Activated CD4-positive, alpha-beta memory T cell treated with anti-CD3 and anti-CD28 coated beads for 36 hours (primary cell): ENCODE measurements at regions of chr12 and their contacts with region 1.

Region 1: GRCh38 chr12:96194971-96195844 is 1.0 kb downstream of the ELK3 start:
- DNase-seq: peak; percentile 87
- H3K4me3 Mint-ChIP-seq: peak overlapping the region; percentile 93
- H3K27ac Mint-ChIP-seq: peak overlapping the region; percentile 99
- H3K4me1 Mint-ChIP-seq: peaks cover 45% of the 10 kb centered on the region
- H3K27me3 Mint-ChIP-seq: no peaks in the 10 kb centered on the region

Region 2: DNA sequence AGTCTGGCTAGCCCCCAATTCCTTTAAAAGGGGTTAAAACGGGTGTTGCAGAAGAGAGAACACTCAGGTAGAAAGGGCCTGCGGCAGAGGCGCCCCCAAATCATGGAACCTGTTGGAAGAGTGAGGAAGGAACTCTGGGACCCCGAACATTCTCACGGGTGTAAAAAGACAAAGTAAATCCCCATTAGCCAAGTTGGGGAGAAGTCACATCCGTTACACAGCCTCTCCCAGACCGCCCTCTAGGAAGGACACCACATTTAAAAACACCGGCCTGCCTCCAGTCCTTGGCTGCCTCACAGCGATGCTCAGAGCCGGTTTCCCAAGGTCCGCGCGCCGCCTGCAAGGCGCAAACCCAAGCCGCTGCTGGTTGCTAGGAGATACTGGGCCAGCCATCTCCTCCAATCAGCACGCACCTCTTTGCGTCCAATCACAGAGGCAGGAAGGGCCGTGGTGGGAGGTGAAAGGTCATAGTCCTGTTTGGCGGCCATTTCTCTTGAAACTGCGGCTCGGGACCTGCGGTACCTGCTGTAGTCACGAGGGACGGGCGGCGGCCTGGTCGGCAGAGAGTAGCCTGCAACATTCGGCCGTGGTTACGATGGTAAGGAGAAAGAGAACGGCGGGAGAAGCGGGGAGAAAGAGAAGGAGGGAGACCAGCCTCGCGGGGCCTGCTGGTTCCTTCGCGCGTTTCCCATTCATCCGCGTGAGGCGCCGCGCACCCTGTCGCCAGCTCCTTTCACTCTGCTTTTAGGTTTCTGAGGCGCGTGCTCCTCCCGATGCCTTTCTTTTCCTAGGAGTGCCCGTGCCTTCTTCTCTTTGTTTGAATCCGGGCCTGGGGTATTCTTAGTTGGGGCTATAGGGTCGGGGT is 336.5 kb before region 1 on chr12 and contains the start of gene SNRPF:
- CTCF ChIA-PET with region 1: no interaction called
- POLR2A ChIA-PET with region 1: no interaction called
- intact Hi-C with region 1: loop called (anchors 10 kb)
- DNase-seq: peak; percentile 97
- H3K4me3 Mint-ChIP-seq: no peak within 1 kb of the TSS
- H3K27ac Mint-ChIP-seq: no peak within 1 kb of the TSS
- H3K4me1 Mint-ChIP-seq: peaks cover 38% of the 10 kb centered on the region
- H3K27me3 Mint-ChIP-seq: peaks cover 5% of the 10 kb centered on the region
- total RNA-seq, gene SNRPF: 45.4 to 46.0 TPM

Region 3: GRCh38 chr12:96132819-96133218 is 62.4 kb before region 1 on chr12:
- CTCF ChIA-PET with region 1: interaction called, 4 read pairs
- POLR2A ChIA-PET with region 1: no interaction called
- intact Hi-C with region 1: loop called (anchors 1 kb)
- DNase-seq: peak; percentile 31
- H3K4me3 Mint-ChIP-seq: no peak overlapping the region
- H3K27ac Mint-ChIP-seq: no peak overlapping the region
- H3K4me1 Mint-ChIP-seq: peaks cover 22% of the 10 kb centered on the region
- H3K27me3 Mint-ChIP-seq: peaks cover 6% of the 10 kb centered on the region

Region 4: GRCh38 chr12:96208801-96209549 is 13.8 kb after region 1 on chr12:
- CTCF ChIA-PET with region 1: interaction called, 13 read pairs
- POLR2A ChIA-PET with region 1: interaction called, 31 read pairs
- intact Hi-C with region 1: loop called (anchors 1 kb)
- DNase-seq: peak; percentile 15
- H3K4me3 Mint-ChIP-seq: peak overlapping the region; percentile 30
- H3K27ac Mint-ChIP-seq: peak overlapping the region; percentile 93
- H3K4me1 Mint-ChIP-seq: peaks cover 95% of the 10 kb centered on the region
- H3K27me3 Mint-ChIP-seq: no peaks in the 10 kb centered on the region

Region 5: DNA sequence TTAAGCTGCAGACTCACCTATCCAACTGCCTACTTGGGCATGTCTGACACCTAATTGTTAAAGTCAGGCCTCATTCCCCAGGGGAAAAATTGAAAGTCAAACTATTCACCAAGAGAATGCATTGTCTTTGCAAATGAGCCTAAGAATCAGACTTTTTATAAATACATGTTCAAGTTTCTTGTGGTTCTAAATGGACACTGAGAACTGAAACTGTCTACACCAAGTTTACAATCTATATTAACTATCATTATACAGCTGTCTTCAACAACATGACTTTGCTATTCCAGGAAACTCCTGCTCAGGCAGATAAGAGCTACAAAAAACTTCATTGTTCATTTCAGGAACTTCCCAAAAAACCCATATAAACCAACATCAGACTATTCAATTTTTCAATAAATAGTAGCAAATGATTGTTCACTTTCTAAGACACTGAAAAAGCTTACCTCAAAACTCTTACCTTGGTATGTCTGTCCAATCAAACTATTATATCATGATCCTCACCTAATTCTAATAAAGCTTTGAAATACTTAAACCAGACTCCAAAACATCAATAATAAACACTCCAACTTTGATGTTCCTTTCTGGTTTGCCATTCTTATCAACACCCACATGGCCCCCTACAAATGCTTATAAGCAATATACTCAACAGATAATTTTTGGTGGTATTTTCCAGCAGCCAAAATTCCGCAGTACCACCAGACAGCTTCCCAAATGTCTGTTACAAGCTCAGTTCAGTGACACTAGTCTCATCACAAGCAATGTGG is 180.8 kb after region 1 on chr12:
- CTCF ChIA-PET with region 1: no interaction called
- POLR2A ChIA-PET with region 1: no interaction called
- intact Hi-C with region 1: loop called (anchors 5 kb)
- DNase-seq: no peak
- H3K4me3 Mint-ChIP-seq: no peak overlapping the region
- H3K27ac Mint-ChIP-seq: peak overlapping the region; percentile 96
- H3K4me1 Mint-ChIP-seq: peaks cover 75% of the 10 kb centered on the region
- H3K27me3 Mint-ChIP-seq: no peaks in the 10 kb centered on the region

Region 6: GRCh38 chr12:96489103-96490056 is 294.2 kb after region 1 on chr12 and contains the start of gene CFAP54:
- CTCF ChIA-PET with region 1: interaction called, 3 read pairs
- POLR2A ChIA-PET with region 1: no interaction called
- intact Hi-C with region 1: loop called (anchors 1 kb)
- DNase-seq: peak; percentile 96
- H3K4me3 Mint-ChIP-seq: peak within 1 kb of the TSS; percentile 83
- H3K27ac Mint-ChIP-seq: peak within 1 kb of the TSS; percentile 16
- H3K4me1 Mint-ChIP-seq: peaks cover 36% of the 10 kb centered on the region
- H3K27me3 Mint-ChIP-seq: no peaks in the 10 kb centered on the region
- total RNA-seq, gene CFAP54: 0.31 to 0.33 TPM

Region 7: DNA sequence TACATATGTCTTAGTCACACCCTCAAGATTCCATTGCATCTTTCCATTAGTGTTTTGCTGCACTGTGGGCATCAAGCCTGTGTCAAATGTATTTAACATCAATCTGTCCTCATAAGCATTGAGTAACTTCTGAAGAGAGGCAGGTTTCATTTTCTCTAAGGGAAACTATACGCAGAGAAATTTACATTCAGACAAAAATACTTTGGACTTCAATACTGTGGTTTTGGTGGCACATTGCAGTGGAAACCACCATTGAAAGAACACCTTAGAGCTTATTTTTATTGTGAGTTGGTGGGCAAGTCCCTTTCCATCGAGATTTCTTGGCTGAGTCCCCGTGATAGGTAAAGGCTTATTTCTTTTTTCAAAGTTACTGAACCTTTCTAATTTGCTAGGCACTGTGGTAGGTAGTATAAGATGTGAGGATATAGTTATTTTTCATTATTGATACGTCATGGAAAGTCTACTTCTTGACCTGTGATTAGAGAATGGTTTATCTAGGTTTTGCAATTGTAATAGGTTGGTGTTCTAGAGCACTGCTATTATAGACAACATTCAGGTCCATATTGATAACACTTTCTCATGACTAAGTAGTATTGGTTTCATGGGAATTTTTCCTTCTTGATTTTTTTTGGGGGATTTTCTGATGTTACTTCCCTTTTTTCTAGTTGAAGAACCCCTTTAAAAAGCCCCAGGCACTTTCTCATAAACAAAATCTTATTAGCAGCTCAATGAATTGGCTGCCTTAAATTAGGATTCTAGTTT is 376.1 kb after region 1 on chr12:
- CTCF ChIA-PET with region 1: no interaction called
- POLR2A ChIA-PET with region 1: no interaction called
- intact Hi-C with region 1: loop called (anchors 2 kb)
- DNase-seq: peak; percentile 33
- H3K4me3 Mint-ChIP-seq: peak overlapping the region; percentile 40
- H3K27ac Mint-ChIP-seq: peak overlapping the region; percentile 65
- H3K4me1 Mint-ChIP-seq: peaks cover 26% of the 10 kb centered on the region
- H3K27me3 Mint-ChIP-seq: peaks cover 4% of the 10 kb centered on the region